ENCODE measurements at regions of chr3 and their contacts with region 1.

Region 1: DNA sequence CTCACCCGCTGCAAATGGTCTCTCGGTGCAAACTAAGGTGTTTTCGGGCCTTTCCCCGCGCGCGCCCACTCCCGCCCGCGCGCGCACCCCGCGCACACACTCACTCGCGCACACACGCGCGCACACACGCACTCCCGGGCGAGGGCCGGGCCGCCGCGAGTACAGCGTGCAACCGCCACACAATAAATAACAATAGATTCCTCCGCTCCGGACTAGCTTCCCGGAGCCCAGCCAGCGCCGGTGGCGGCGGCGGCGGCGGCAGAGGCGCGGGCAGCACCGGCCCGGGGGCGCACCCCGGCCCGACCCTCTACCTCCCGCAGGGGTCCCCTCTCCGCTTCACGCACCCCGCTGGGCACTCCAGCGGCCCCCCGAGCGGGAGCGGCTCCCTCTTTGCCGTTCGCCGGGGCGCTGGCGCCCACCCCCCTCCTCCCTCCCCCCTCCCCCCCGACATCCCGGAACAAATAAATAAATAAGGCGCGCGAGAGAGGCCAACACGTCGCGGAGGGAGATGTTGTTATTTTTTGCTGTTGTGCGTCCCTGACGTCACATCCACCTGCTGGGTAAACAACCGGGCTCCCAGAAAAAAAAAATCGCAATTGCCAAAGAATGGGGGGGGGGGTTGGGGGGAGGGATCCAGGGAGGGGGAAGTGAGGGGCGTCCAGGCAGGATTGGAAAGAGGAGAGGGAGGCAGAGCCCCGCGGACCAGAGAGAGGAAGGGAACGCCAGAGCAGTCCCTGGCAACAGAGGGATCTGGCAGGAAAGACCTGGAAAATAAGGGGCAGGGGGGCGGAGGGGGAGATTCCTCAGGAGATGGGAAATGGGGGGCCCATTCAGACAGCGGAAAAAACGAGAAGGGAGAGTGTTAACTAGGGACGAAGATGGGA is at the start of gene FOXP1:
- DNase-seq: peak; percentile 69 to 80 (median 75)
- H3K4me3 ChIP-seq: peak within 1 kb of the TSS; percentile 47 to 65
- H3K4me3 Mint-ChIP-seq: peak within 1 kb of the TSS; percentile 91 to 96 (median 94)
- H3K27ac ChIP-seq: peak within 1 kb of the TSS; percentile 64
- H3K27ac Mint-ChIP-seq: peak within 1 kb of the TSS; percentile 94 to 98 (median 97)
- H3K4me1 ChIP-seq: peaks cover 27% of the 10 kb centered on the region
- H3K4me1 Mint-ChIP-seq: peaks cover 14 to 53% (median 20%) of the 10 kb centered on the region in 4 donors
- H3K27me3 ChIP-seq: no peaks in the 10 kb centered on the region
- H3K27me3 Mint-ChIP-seq: no peaks in the 10 kb centered on the region
- total RNA-seq, gene FOXP1: 290 to 348 TPM

Region 2: DNA sequence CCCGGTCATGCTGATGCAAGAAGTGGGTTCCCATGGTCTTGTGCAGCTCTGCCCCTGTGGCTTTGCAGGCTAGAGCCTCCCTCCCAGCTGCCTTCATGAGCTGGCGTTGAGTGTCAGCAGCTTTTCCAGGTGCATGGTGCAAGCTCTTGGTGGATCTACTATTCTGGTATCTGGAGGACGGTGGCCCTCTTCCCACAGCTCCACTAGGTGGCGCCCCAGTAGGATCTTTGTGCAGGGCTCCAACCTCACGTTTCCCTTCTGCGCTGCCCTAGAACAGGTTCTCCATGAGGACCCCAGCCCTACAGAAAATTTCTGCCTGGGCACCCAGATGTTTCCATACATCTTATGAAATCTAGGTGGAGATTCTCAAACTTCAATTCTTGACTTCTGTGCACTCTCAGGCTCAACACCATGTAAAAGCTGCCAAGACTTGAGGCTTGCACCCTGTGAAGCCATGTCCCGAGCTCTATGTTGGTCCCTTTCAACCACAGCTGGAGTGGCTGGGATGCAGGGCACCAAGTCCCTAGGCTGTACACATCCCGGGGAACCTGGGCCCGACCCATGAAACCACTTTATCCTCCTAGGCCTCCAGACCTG is 1033.0 kb before region 1 on chr3:
- CTCF ChIA-PET with region 1: interaction called, 36 read pairs
- POLR2A ChIA-PET with region 1: interaction called, 3 read pairs
- intact Hi-C with region 1: loop called (anchors 1 kb)
- DNase-seq: peak; percentile 54 to 62 (median 60)
- H3K4me3 ChIP-seq: no peak overlapping the region
- H3K4me3 Mint-ChIP-seq: no peak overlapping the region
- H3K27ac ChIP-seq: no peak overlapping the region
- H3K27ac Mint-ChIP-seq: no peak overlapping the region
- H3K4me1 ChIP-seq: no peaks in the 10 kb centered on the region
- H3K4me1 Mint-ChIP-seq: no peaks in the 10 kb centered on the region
- H3K27me3 ChIP-seq: peaks cover 3% of the 10 kb centered on the region
- H3K27me3 Mint-ChIP-seq: peaks cover 4% of the 10 kb centered on the region in 2 donors

Region 3: GRCh38 chr3:71064288-71064955 is 519.4 kb before region 1 on chr3:
- CTCF ChIA-PET with region 1: interaction called, 3 read pairs
- POLR2A ChIA-PET with region 1: interaction called, 18 read pairs
- intact Hi-C with region 1: loop called (anchors 1 kb)
- DNase-seq: peak; percentile 79 to 86 (median 83)
- H3K4me3 ChIP-seq: peak overlapping the region; percentile 73 to 90
- H3K4me3 Mint-ChIP-seq: no peak overlapping the region
- H3K27ac ChIP-seq: peak overlapping the region; percentile 90
- H3K27ac Mint-ChIP-seq: no peak overlapping the region
- H3K4me1 ChIP-seq: peaks cover 73% of the 10 kb centered on the region
- H3K4me1 Mint-ChIP-seq: peaks cover 37 to 67% (median 56%) of the 10 kb centered on the region in 4 donors
- H3K27me3 ChIP-seq: no peaks in the 10 kb centered on the region
- H3K27me3 Mint-ChIP-seq: no peaks in the 10 kb centered on the region

Region 4: GRCh38 chr3:71305231-71306206 is 278.3 kb before region 1 on chr3:
- CTCF ChIA-PET with region 1: interaction called, 3 read pairs
- POLR2A ChIA-PET with region 1: no interaction called
- intact Hi-C with region 1: loop called (anchors 5 kb)
- DNase-seq: peak in 2 of 5 donors; percentile 14 to 15
- H3K4me3 ChIP-seq: peak overlapping the region; percentile 21 to 30
- H3K4me3 Mint-ChIP-seq: peak overlapping the region; percentile 82 to 96 (median 88)
- H3K27ac ChIP-seq: peak overlapping the region; percentile 11
- H3K27ac Mint-ChIP-seq: peak overlapping the region; percentile 81 to 96 (median 88)
- H3K4me1 ChIP-seq: peaks cover 80% of the 10 kb centered on the region
- H3K4me1 Mint-ChIP-seq: peaks cover 62 to 92% (median 76%) of the 10 kb centered on the region in 4 donors
- H3K27me3 ChIP-seq: no peaks in the 10 kb centered on the region
- H3K27me3 Mint-ChIP-seq: no peaks in the 10 kb centered on the region

Region 5: GRCh38 chr3:71702131-71703024 is 118.6 kb after region 1 on chr3:
- CTCF ChIA-PET with region 1: no interaction called
- POLR2A ChIA-PET with region 1: no interaction called
- intact Hi-C with region 1: loop called (anchors 5 kb)
- DNase-seq: peak; percentile 43 to 70 (median 59)
- H3K4me3 ChIP-seq: no peak overlapping the region
- H3K4me3 Mint-ChIP-seq: peak overlapping the region; percentile 46 to 83 (median 76)
- H3K27ac ChIP-seq: peak overlapping the region; percentile 41
- H3K27ac Mint-ChIP-seq: peak overlapping the region; percentile 77 to 90 (median 86)
- H3K4me1 ChIP-seq: peaks cover 63% of the 10 kb centered on the region
- H3K4me1 Mint-ChIP-seq: peaks cover 53 to 77% (median 63%) of the 10 kb centered on the region in 4 donors
- H3K27me3 ChIP-seq: no peaks in the 10 kb centered on the region
- H3K27me3 Mint-ChIP-seq: no peaks in the 10 kb centered on the region

Region 6: DNA sequence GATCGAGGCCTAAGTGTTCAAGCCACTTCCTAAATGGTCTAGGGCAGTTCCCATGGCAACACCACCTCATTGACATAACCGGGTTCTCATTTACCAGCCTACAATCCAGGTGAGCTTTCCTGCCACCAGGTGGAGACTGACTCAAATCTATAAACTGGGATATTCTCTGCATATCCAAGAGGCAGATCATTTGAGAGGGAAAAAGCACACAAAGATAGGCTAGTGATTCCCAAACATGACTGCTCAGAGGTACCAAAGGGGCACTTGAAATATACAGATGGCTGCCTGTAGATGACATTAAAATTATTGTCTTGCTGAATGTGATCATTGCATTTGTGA is 342.4 kb after region 1 on chr3:
- CTCF ChIA-PET with region 1: no interaction called
- POLR2A ChIA-PET with region 1: no interaction called
- intact Hi-C with region 1: no loop called
- DNase-seq: peak in 2 of 5 donors; percentile 4
- H3K4me3 ChIP-seq: no peak overlapping the region
- H3K4me3 Mint-ChIP-seq: no peak overlapping the region
- H3K27ac ChIP-seq: no peak overlapping the region
- H3K27ac Mint-ChIP-seq: no peak overlapping the region
- H3K4me1 ChIP-seq: no peaks in the 10 kb centered on the region
- H3K4me1 Mint-ChIP-seq: no peaks in the 10 kb centered on the region
- H3K27me3 ChIP-seq: no peaks in the 10 kb centered on the region
- H3K27me3 Mint-ChIP-seq: peaks cover 2 to 17% of the 10 kb centered on the region in 2 donors